ENCODE measurements at regions of chr6 and their contacts with region 1.

Region 1: GRCh38 chr6:44002593-44003344 is 124.5 kb downstream of the MRPL14 start:
- DNase-seq: no peak
- ATAC-seq: peak; percentile 28
- H3K4me3 ChIP-seq: peak overlapping the region; percentile 49
- H3K27ac ChIP-seq: no peak overlapping the region; the same call in 1 of the 2 replicates
- H3K4me1 ChIP-seq: peaks cover 20% of the 10 kb centered on the region
- H3K27me3 ChIP-seq: peaks cover 0 to 4% of the 10 kb centered on the region in 2 experiments; a peak in 2 of 4 replicates
- CTCF ChIP-seq: peak in 2 of 3 experiments; percentile 4 to 53; a peak in 3 of 6 replicates
- EP300 ChIP-seq: no peak; a peak in 1 of 4 replicates
- POLR2A ChIP-seq: no peak
- RAD21 ChIP-seq: 0 out of 2 replicates have a peak, but pooled peaks have one; percentile 8

Region 2: DNA sequence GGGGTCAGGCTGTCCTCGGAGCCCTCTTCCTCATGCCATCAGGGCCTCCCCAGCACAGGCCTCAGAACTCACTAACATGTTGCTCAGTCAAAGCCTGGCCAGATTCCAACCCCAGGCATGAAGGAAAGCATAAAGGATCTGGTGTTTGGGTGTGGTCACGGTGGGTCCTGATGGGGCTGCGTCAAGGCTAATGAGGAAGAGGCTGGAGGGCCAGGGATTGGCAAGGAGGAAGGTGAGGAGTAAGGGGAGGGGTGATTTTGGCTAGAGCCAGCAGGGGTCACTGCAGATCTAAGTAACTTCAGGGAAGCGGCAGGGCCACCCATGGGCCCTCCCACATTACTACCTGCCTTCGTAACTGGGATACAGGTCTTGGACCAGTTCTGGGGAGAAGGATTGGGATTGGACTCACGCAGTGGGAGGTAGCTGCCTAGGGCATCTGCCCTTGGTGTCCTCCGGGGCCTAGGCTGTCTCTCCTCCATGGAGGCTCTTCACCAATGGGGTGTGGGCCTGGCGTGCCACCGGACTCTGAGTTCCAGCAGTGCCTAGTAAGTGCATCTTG is 279.0 kb before region 1 on chr6:
- CTCF ChIA-PET with region 1: interaction called, 6 read pairs
- POLR2A ChIA-PET with region 1: no interaction called
- RAD21 ChIA-PET with region 1: interaction called, 8 read pairs
- SMC1A ChIA-PET with region 1: interaction called, 3 read pairs
- in situ Hi-C with region 1: no loop called
- intact Hi-C with region 1: loop called (anchors 2 kb)
- DNase-seq: no peak
- ATAC-seq: peak; percentile 88
- H3K4me3 ChIP-seq: no peak overlapping the region
- H3K27ac ChIP-seq: no peak overlapping the region
- H3K4me1 ChIP-seq: peaks cover 24% of the 10 kb centered on the region
- H3K27me3 ChIP-seq: no peaks in the 10 kb centered on the region
- CTCF ChIP-seq: peak; percentile 76 to 93 (median 81)
- EP300 ChIP-seq: no peak
- POLR2A ChIP-seq: no peak
- RAD21 ChIP-seq: peak; percentile 82

Region 3: DNA sequence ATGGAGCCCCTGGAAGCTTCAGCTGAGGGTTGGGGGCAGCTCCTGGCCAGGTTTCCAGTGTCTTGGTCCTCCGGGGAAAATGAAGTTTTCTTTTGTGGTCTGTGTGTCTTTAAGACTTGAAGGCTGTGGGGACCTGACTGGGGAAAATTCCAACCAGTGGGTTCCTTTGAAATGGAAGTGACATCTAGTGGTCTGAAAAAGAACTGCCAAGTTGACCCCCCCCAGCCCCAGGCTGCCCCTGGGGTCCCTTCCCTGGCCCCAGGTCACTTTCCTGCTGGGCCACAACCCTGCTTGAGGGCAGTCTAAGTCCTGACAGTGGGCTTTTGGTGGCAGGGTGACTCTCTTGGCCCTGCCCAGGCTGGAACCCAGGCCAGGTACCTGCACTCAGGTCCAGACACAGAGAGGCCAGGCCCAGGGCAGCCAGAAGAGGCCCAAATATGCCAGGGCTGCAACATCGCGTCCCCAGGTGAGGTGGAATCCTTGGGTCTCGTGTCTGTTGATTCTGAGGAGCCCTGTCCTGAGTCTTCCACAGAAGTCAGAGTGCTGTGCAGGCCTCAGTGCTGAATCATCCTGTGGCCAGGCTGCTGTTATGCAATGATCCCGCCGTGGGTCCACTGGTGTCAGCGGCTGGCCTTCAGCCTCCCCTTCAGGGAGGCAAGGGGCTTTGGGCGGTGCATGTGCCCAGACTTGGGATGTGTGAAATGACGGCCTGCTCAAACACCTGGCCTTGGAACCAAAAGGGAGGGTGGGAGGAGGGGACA is 164.3 kb before region 1 on chr6:
- CTCF ChIA-PET with region 1: interaction called, 6 read pairs
- POLR2A ChIA-PET with region 1: no interaction called
- RAD21 ChIA-PET with region 1: interaction called, 3 read pairs
- SMC1A ChIA-PET with region 1: interaction called, 6 read pairs
- in situ Hi-C with region 1: no loop called
- intact Hi-C with region 1: loop called (anchors 5 kb)
- DNase-seq: no peak
- ATAC-seq: peak; percentile 86
- H3K4me3 ChIP-seq: no peak overlapping the region
- H3K27ac ChIP-seq: no peak overlapping the region
- H3K4me1 ChIP-seq: no peaks in the 10 kb centered on the region
- H3K27me3 ChIP-seq: no peaks in the 10 kb centered on the region; a peak in 1 of 4 replicates
- CTCF ChIP-seq: peak; percentile 52 to 63 (median 60)
- EP300 ChIP-seq: no peak
- POLR2A ChIP-seq: no peak
- RAD21 ChIP-seq: peak; percentile 54

Region 4: GRCh38 chr6:43951063-43951755 is 51.6 kb before region 1 on chr6:
- CTCF ChIA-PET with region 1: interaction called, 6 read pairs
- POLR2A ChIA-PET with region 1: no interaction called
- RAD21 ChIA-PET with region 1: interaction called, 7 read pairs
- SMC1A ChIA-PET with region 1: interaction called, 6 read pairs
- in situ Hi-C with region 1: no loop called
- intact Hi-C with region 1: loop called (anchors 2 kb)
- DNase-seq: no peak
- ATAC-seq: peak; percentile 88
- H3K4me3 ChIP-seq: no peak overlapping the region
- H3K27ac ChIP-seq: no peak overlapping the region
- H3K4me1 ChIP-seq: no peaks in the 10 kb centered on the region
- H3K27me3 ChIP-seq: no peaks in the 10 kb centered on the region
- CTCF ChIP-seq: peak; percentile 36 to 51 (median 41); a peak in 4 of 6 replicates
- EP300 ChIP-seq: no peak
- POLR2A ChIP-seq: no peak
- RAD21 ChIP-seq: peak; percentile 42; the same call in 1 of the 2 replicates

Region 5: DNA sequence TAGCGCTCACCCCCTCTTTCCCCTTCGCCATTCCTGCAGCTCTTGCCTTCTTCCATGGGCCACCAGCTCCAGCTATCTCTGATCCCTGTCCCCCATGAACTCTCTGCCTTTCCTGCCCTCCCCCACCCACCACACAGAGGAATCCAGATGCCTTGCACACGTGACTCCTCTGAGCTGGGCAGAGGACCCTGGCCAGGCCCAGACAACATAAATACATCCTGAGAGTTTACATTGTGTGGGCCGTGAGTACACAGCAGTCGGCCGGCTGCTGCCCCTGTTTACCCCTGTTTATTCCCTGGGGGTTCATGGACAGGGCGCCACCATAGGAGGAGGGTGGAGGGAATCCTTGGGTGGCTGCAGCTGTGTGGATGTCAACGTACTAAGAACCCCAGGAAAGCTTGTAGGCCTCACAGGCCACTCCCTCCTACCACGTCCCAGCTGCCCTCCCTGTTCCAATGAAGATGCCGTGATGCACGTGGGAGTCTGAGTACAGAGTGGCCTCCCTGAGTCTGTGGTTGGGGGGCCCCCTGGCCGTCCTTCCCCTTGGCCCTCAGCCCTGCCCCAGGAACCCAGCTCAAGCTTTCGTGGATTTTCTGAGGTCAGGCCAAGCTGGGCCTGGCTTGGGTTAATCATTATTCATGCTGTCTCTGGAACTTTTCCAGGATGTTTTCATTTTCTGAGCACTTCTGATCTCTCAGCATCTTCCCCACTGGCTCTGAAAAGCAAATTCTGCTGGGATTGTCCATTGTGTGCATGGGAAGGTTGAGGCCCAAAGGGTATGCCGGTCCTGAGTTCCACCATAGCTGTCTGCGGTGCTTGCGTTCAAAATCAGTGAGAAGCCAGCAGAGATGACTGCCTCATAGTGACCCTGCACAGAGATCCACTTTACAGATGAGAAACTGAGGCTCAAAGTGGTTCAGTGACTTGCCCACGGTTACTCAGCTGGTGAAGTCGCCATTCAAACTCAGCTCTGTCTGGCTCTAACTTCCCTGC is 11.8 kb before region 1 on chr6:
- CTCF ChIA-PET with region 1: interaction called, 10 read pairs
- POLR2A ChIA-PET with region 1: interaction called, 7 read pairs
- RAD21 ChIA-PET with region 1: interaction called, 15 read pairs
- SMC1A ChIA-PET with region 1: interaction called, 24 read pairs
- in situ Hi-C with region 1: no loop called
- intact Hi-C with region 1: no loop called
- DNase-seq: no peak
- ATAC-seq: no peak
- H3K4me3 ChIP-seq: no peak overlapping the region
- H3K27ac ChIP-seq: no peak overlapping the region
- H3K4me1 ChIP-seq: peaks cover 10% of the 10 kb centered on the region
- H3K27me3 ChIP-seq: no peaks in the 10 kb centered on the region
- CTCF ChIP-seq: no peak
- EP300 ChIP-seq: no peak
- POLR2A ChIP-seq: no peak
- RAD21 ChIP-seq: no peak